CD4-positive, alpha-beta memory T cell (primary cell): ENCODE measurements at regions of chr7 and their contacts with region 1.

Region 1: GRCh38 chr7:66740302-66740979 is at the start of gene RABGEF1:
- DNase-seq: peak; percentile 95 to 98 (median 96)
- H3K4me3 ChIP-seq: peak within 1 kb of the TSS; percentile 40 to 76
- H3K4me3 Mint-ChIP-seq: peak within 1 kb of the TSS; percentile 91 to 98 (median 94)
- H3K27ac ChIP-seq: peak within 1 kb of the TSS; percentile 85
- H3K27ac Mint-ChIP-seq: peak within 1 kb of the TSS; percentile 95 to 99 (median 97)
- H3K4me1 ChIP-seq: peaks cover 16% of the 10 kb centered on the region
- H3K4me1 Mint-ChIP-seq: peaks cover 15 to 55% (median 38%) of the 10 kb centered on the region in 4 donors
- H3K27me3 ChIP-seq: no peaks in the 10 kb centered on the region
- H3K27me3 Mint-ChIP-seq: no peaks in the 10 kb centered on the region
- total RNA-seq, gene RABGEF1: 23.0 to 28.6 TPM

Region 2: DNA sequence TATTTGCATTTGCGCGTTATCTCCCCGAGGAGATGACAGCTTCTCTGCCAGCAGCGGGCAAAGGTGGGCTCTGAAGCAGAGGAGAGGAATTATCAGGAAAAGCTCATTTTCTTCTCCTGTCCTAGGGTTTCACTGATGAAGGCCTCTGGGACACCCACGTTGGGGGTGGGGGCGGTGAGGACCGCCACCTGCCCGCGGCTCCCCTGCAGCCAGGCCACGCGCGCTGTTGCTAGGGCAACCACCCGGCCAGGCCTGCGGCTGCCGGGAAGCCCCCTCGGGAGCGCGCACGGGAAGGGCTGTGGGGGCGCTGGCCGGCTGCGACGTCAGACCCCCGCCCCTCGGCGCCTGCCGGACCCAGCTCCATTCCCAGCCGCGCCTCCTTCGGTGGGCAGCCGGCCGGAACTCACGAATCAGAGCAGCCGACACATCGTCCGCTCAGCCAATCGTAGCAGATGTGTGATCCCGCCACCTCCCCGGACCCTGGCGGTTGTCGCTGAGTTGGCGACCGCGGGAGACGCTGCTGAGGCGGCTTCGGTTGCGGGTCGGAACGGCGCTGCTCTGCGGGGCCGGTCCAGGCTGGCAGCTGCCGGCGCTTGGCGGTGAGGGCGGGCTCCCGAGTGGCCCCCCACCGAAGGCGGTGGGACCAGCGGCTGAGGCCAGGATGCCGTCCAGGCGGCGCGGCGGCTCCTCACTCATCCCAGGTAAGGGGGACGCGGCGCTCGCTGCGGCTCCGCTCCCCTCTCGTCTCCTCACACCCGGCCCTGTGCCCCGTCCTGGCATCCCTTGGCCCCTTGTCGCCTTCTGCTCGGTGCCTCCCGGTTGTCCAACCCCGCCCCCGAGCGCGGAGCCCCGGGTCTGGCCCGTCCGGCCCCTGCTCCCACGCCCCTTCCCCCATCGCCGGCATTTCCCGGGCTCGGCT is 535.4 kb before region 1 on chr7 and contains the start of gene TPST1:
- CTCF ChIA-PET with region 1: no interaction called
- POLR2A ChIA-PET with region 1: no interaction called
- intact Hi-C with region 1: loop called (anchors 5 kb)
- DNase-seq: peak; percentile 66 to 75 (median 71)
- H3K4me3 ChIP-seq: peak within 1 kb of the TSS in 1 of 2 donors; percentile 60
- H3K4me3 Mint-ChIP-seq: peak within 1 kb of the TSS; percentile 83 to 93 (median 88)
- H3K27ac ChIP-seq: no peak within 1 kb of the TSS
- H3K27ac Mint-ChIP-seq: peak within 1 kb of the TSS in 6 of 7 donors; percentile 60 to 87 (median 77)
- H3K4me1 ChIP-seq: peaks cover 20% of the 10 kb centered on the region
- H3K4me1 Mint-ChIP-seq: peaks cover 28 to 43% (median 34%) of the 10 kb centered on the region in 4 donors
- H3K27me3 ChIP-seq: peaks cover 22% of the 10 kb centered on the region
- H3K27me3 Mint-ChIP-seq: peaks cover 12 to 27% of the 10 kb centered on the region in 2 donors
- total RNA-seq, gene TPST1: 0.91 to 1.2 TPM

Region 3: DNA sequence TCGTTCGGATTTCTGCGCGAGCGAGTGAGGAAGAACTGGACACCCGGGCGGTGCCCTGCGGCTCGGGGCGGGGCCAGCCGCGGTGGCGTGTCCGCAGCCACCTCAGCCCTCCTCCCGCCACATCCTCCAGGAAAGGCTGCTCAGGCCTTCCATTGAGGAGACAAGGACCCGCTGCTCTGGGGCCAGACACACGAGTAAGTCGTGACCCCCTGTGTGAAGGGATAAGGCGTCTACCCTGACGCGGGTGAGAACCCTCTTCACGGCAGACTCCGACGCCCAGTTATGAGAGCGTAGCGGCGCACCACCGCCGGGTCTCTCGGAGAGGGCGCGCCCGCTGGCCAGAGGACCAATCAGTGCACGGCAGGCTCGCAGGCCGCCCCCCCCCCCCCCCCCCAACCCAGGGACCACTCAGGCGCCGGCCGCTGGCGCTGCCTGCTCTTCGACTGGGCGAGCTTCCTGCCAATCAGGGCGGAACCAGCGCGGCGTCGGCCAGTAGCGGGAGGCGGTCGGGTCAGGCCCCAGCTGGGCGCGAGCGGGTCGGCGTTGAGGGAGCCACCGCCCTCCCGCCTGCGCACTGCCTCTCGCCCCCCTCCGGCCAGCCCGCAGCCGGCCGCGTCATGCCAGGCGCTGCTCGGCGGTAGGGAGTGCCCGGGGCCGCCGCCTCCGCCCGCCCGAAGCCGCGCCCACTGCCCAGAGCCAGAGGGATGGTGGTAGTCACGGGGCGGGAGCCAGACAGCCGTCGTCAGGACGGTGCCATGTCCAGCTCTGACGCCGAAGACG is 111.9 kb before region 1 on chr7 and contains the start of gene KCTD7:
- CTCF ChIA-PET with region 1: interaction called, 3 read pairs
- POLR2A ChIA-PET with region 1: interaction called, 17 read pairs
- intact Hi-C with region 1: loop called (anchors 1 kb)
- DNase-seq: peak; percentile 94 to 97 (median 95)
- H3K4me3 ChIP-seq: peak within 1 kb of the TSS; percentile 77 to 89
- H3K4me3 Mint-ChIP-seq: peak within 1 kb of the TSS; percentile 87 to 92 (median 91)
- H3K27ac ChIP-seq: peak within 1 kb of the TSS; percentile 89
- H3K27ac Mint-ChIP-seq: peak within 1 kb of the TSS; percentile 87 to 95 (median 93)
- H3K4me1 ChIP-seq: peaks cover 41% of the 10 kb centered on the region
- H3K4me1 Mint-ChIP-seq: peaks cover 36 to 46% (median 39%) of the 10 kb centered on the region in 4 donors
- H3K27me3 ChIP-seq: no peaks in the 10 kb centered on the region
- H3K27me3 Mint-ChIP-seq: no peaks in the 10 kb centered on the region
- total RNA-seq, gene KCTD7: 57.3 to 63.8 TPM

Region 4: GRCh38 chr7:66681491-66682349 is 58.7 kb before region 1 on chr7:
- CTCF ChIA-PET with region 1: interaction called, 3 read pairs
- POLR2A ChIA-PET with region 1: interaction called, 10 read pairs
- intact Hi-C with region 1: loop called (anchors 1 kb)
- DNase-seq: peak; percentile 94 to 97 (median 95)
- H3K4me3 ChIP-seq: peak overlapping the region; percentile 78 to 84
- H3K4me3 Mint-ChIP-seq: peak overlapping the region; percentile 90 to 99 (median 92)
- H3K27ac ChIP-seq: peak overlapping the region; percentile 99
- H3K27ac Mint-ChIP-seq: peak overlapping the region; percentile 95 to 99 (median 98)
- H3K4me1 ChIP-seq: peaks cover 18% of the 10 kb centered on the region
- H3K4me1 Mint-ChIP-seq: peaks cover 14 to 38% (median 26%) of the 10 kb centered on the region in 4 donors
- H3K27me3 ChIP-seq: no peaks in the 10 kb centered on the region
- H3K27me3 Mint-ChIP-seq: no peaks in the 10 kb centered on the region

Region 5: DNA sequence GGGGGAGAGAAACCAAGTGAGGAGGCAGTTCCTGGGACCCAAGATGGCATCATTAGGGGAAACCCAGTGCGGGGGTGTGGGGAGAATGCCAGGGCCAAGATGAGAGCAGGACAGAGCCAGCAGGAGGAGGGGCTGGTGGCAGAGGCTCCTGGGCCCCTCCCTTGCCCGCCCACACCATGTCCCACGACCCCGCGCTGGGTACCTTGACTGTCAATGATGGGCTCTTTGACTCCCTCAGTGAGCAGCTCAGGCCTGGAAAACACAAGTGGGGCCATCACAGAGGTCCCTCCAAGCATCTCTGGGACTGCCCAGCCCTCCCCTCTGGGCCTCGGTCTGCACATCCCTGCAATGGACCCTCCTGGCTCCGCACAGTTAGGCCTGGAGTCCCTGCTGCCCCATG is 75.5 kb after region 1 on chr7:
- CTCF ChIA-PET with region 1: no interaction called
- POLR2A ChIA-PET with region 1: no interaction called
- intact Hi-C with region 1: no loop called
- DNase-seq: no peak
- H3K4me3 ChIP-seq: no peak overlapping the region
- H3K4me3 Mint-ChIP-seq: no peak overlapping the region
- H3K27ac ChIP-seq: no peak overlapping the region
- H3K27ac Mint-ChIP-seq: no peak overlapping the region
- H3K4me1 ChIP-seq: no peaks in the 10 kb centered on the region
- H3K4me1 Mint-ChIP-seq: peaks cover 0 to 7% (median under 1%) of the 10 kb centered on the region in 4 donors
- H3K27me3 ChIP-seq: no peaks in the 10 kb centered on the region
- H3K27me3 Mint-ChIP-seq: no peaks in the 10 kb centered on the region

Region 6: DNA sequence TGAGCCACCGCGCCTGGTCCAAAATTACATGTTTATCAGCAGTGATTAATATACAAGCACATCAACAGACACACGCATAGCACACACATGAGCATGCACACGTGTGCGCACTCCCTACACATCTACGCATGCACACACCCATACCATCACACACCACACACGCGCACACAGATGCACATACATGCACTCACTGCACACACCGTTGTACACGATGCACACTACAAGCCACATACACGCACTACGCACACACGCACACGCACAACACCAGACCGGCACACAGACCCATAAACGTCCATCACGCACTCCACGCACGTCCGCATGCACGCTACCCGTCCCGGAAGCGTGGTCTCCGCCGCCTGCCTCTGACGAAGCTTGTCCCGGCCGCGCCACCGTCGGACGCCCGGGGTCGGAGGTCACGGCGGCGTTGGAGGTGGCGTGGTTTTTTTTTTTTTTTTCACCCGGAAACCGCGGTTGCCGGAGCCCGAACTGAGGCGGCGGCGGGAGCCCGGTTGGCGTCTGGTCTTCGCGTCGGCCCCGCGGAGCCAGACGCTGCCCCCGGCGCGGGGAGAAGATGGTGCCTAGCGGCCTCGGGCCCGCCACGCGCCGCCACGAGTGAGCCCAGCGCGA is 180.4 kb after region 1 on chr7 and contains the start of gene TMEM248:
- CTCF ChIA-PET with region 1: no interaction called
- POLR2A ChIA-PET with region 1: interaction called, 8 read pairs
- intact Hi-C with region 1: loop called (anchors 2 kb)
- DNase-seq: peak; percentile 90 to 95 (median 93)
- H3K4me3 ChIP-seq: peak within 1 kb of the TSS; percentile 64 to 91
- H3K4me3 Mint-ChIP-seq: peak within 1 kb of the TSS; percentile 95 to 100 (median 98)
- H3K27ac ChIP-seq: peak within 1 kb of the TSS; percentile 78
- H3K27ac Mint-ChIP-seq: peak within 1 kb of the TSS; percentile 97 to 100 (median 99)
- H3K4me1 ChIP-seq: peaks cover 38% of the 10 kb centered on the region
- H3K4me1 Mint-ChIP-seq: peaks cover 22 to 49% (median 36%) of the 10 kb centered on the region in 4 donors
- H3K27me3 ChIP-seq: no peaks in the 10 kb centered on the region
- H3K27me3 Mint-ChIP-seq: peaks cover 0 to 2% of the 10 kb centered on the region in 2 donors
- total RNA-seq, gene TMEM248: 95.9 to 96.8 TPM